HEK293 (cell line): ENCODE measurements at regions of chr19 and their contacts with region 1.

Region 1: DNA sequence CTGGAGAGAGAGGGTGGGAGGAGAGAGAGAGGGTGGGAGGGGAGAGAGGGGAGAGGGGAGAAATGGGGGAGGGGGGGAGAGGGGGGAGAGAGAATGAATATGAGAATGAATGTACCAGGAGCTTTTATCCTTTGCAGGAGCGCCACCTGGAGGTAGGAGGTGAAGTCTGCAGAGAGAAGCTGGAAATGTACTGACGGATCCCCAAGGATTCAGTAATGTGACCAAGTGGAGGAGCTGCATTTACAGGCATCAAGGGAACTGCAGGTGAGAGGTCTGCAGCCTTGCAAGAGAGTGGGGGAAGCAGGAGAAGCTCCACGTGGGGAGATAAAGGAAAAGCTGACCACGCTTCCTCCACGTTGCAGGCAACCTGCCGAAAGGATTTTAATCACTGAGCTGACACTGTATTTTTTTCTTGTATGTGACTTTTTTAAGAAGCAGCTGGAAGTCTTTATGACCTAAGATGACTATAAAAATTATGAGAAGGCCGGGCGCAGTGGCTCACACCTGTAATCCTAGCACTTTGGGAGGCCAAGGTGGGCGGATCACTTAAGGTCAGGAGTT is 33.7 kb downstream of the VSTM1 start:
- H3K4me3 ChIP-seq: no peak overlapping the region
- H3K27ac ChIP-seq: no peak overlapping the region
- H3K4me1 ChIP-seq: no peaks in the 10 kb centered on the region
- CTCF ChIP-seq: peak; percentile 33

Region 2: DNA sequence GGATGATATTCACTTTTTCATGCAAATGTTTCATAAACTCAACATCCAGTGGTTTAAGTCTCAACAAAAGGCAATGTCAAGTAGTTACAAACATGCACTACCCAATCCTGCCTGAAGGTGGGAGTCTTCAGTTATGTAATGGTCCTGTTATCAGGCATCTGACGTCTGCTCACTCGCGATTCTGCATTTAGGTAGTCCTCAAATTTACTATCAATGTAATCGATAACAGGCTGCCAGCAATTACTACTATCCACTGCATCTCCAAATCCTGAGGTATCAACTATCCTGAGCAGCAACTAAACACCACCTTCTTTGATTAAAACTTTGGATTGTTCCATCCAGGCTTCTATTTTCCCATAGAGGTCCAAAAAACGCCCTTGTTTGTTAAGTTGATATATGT is 257.1 kb before region 1 on chr19:
- CTCF ChIA-PET with region 1: interaction called, 21 read pairs
- POLR2A ChIA-PET with region 1: no interaction called
- H3K4me3 ChIP-seq: no peak overlapping the region
- H3K27ac ChIP-seq: no peak overlapping the region
- H3K4me1 ChIP-seq: no peaks in the 10 kb centered on the region
- CTCF ChIP-seq: peak; percentile 42; the same call in 1 of the 2 replicates

Region 3: DNA sequence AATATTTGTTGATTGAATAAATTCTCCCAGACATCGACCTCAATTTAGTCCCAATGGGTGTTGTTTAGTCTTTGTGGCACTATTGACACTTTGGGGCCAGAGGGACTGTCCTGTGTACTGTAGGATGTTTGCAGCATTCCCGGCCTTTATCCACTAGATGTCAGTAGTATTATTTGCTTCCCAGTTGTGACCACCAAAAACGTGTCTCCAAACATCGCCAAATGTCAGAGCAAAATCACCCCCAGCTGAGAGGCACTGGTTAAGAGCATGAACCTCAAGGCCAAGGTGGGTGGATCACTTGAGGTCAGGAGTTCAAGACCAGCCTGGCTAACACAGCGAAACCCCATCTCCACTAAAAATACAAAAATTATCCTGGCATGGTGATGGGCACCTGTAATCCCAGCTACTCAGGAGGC is 221.3 kb before region 1 on chr19:
- CTCF ChIA-PET with region 1: interaction called, 47 read pairs
- POLR2A ChIA-PET with region 1: interaction called, 8 read pairs
- H3K4me3 ChIP-seq: no peak overlapping the region
- H3K27ac ChIP-seq: no peak overlapping the region
- H3K4me1 ChIP-seq: no peaks in the 10 kb centered on the region
- CTCF ChIP-seq: peak; percentile 38; the same call in 1 of the 2 replicates

Region 4: DNA sequence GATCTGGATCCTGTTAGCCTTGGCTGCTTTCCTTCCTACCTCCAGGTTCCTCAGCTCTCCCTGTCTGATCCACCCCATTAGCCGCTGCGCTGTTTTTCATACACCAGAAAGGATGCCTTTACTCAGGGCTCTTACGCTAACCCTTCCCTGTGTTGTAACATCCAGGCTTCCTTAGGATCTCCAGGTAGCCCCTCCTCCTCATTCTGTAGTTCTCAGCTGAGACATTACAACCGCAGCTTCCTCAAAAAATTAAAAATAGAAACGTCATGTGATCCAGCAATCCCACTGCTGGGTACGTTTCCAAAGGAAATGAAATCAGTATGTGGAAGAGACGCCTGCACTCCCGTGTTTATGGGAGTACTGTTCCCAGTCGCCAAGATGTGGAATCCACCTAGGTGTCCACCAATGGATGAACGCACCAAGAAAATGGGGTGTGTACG is 180.8 kb before region 1 on chr19:
- CTCF ChIA-PET with region 1: interaction called, 39 read pairs
- POLR2A ChIA-PET with region 1: no interaction called
- H3K4me3 ChIP-seq: no peak overlapping the region
- H3K27ac ChIP-seq: no peak overlapping the region
- H3K4me1 ChIP-seq: no peaks in the 10 kb centered on the region
- CTCF ChIP-seq: no peak

Region 5: DNA sequence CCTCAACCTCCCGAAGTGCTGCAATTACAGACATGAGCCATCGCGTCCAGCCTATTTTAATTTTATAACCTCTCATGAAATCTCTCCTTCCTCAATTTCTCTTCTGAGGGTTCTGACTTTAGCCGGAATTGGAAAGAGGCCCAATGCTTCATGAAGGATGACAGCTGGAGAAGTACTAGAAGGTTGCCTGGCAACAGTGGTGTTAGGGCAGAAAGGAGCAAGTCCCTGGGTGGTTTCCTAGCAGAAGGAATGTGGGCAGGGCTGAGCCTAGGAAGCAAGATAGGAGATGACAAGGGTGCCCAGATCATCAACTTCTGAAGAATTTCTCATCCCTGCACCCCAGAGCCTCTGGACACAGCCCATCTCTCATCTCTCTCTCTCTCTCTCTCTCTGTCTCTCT is 12.7 kb before region 1 on chr19:
- CTCF ChIA-PET with region 1: interaction called, 15 read pairs
- POLR2A ChIA-PET with region 1: no interaction called
- H3K4me3 ChIP-seq: no peak overlapping the region
- H3K27ac ChIP-seq: no peak overlapping the region
- H3K4me1 ChIP-seq: peaks cover 4% of the 10 kb centered on the region; the same call in 1 of the 2 replicates
- CTCF ChIP-seq: no peak

Region 6: GRCh38 chr19:54041969-54042606 is 12.1 kb after region 1 on chr19:
- CTCF ChIA-PET with region 1: interaction called, 26 read pairs
- POLR2A ChIA-PET with region 1: no interaction called
- H3K4me3 ChIP-seq: no peak overlapping the region
- H3K27ac ChIP-seq: no peak overlapping the region
- H3K4me1 ChIP-seq: no peaks in the 10 kb centered on the region
- CTCF ChIP-seq: no peak

Region 7: GRCh38 chr19:54047616-54048015 is 17.6 kb after region 1 on chr19:
- CTCF ChIA-PET with region 1: interaction called, 26 read pairs
- POLR2A ChIA-PET with region 1: no interaction called
- H3K4me3 ChIP-seq: no peak overlapping the region
- H3K27ac ChIP-seq: no peak overlapping the region
- H3K4me1 ChIP-seq: no peaks in the 10 kb centered on the region
- CTCF ChIP-seq: no peak